PC-3 (cell line): ENCODE measurements at regions of chr5 and their contacts with region 1.

Region 1: DNA sequence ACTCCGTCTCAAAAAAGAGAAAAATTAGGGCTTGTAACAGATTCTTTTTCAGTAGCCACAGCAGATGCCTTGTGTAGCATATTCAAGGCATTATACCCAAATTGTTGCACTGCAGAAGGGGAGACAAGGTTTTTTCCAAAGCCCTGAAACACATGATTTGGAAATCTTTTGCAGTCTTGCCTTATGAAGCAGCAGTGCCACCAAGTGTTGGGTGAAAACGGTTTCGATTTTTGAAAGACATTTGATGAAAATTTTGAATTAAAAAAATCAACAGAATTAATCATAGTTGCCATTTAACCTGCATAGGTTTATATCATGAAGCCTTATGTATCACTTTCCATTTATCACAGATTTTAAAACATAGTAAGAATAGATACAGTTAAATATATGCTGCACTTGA is 479.5 kb downstream of the TAF11L14 start:
- DNase-seq: peak; percentile 70
- ATAC-seq: 0 out of 2 replicates have a peak, but pooled peaks have one; percentile 13
- H3K4me3 ChIP-seq: no peak overlapping the region
- H3K27ac ChIP-seq: no peak overlapping the region
- H3K4me1 ChIP-seq: 0 out of 2 replicates have a peak, but pooled peaks cover 4% of the 10 kb centered on the region
- H3K27me3 ChIP-seq: no peaks in the 10 kb centered on the region
- CTCF ChIP-seq: peak; percentile 75

Region 2: GRCh38 chr5:17896605-17897004 is 217.1 kb before region 1 on chr5:
- CTCF ChIA-PET with region 1: no interaction called
- POLR2A ChIA-PET with region 1: no interaction called
- intact Hi-C with region 1: loop called (anchors 10 kb)
- DNase-seq: no peak
- ATAC-seq: no peak
- H3K4me3 ChIP-seq: no peak overlapping the region
- H3K27ac ChIP-seq: no peak overlapping the region
- H3K4me1 ChIP-seq: peaks cover 4% of the 10 kb centered on the region; the same call in 1 of the 2 replicates
- H3K27me3 ChIP-seq: no peaks in the 10 kb centered on the region
- CTCF ChIP-seq: no peak

Region 3: GRCh38 chr5:18181575-18181974 is 67.9 kb after region 1 on chr5:
- CTCF ChIA-PET with region 1: no interaction called
- POLR2A ChIA-PET with region 1: no interaction called
- intact Hi-C with region 1: no loop called
- DNase-seq: no peak
- ATAC-seq: no peak
- H3K4me3 ChIP-seq: no peak overlapping the region
- H3K27ac ChIP-seq: no peak overlapping the region
- H3K4me1 ChIP-seq: no peaks in the 10 kb centered on the region
- H3K27me3 ChIP-seq: no peaks in the 10 kb centered on the region
- CTCF ChIP-seq: no peak

Region 4: GRCh38 chr5:18281682-18282557 is 168.2 kb after region 1 on chr5:
- CTCF ChIA-PET with region 1: no interaction called
- POLR2A ChIA-PET with region 1: no interaction called
- intact Hi-C with region 1: loop called (anchors 5 kb)
- DNase-seq: peak; percentile 65
- ATAC-seq: peak; percentile 81
- H3K4me3 ChIP-seq: no peak overlapping the region
- H3K27ac ChIP-seq: no peak overlapping the region
- H3K4me1 ChIP-seq: no peaks in the 10 kb centered on the region
- H3K27me3 ChIP-seq: peaks cover 5% of the 10 kb centered on the region; the same call in 1 of the 2 replicates
- CTCF ChIP-seq: peak; percentile 86